ENCODE measurements at regions of chr7 and their contacts with region 1.

Region 1: DNA sequence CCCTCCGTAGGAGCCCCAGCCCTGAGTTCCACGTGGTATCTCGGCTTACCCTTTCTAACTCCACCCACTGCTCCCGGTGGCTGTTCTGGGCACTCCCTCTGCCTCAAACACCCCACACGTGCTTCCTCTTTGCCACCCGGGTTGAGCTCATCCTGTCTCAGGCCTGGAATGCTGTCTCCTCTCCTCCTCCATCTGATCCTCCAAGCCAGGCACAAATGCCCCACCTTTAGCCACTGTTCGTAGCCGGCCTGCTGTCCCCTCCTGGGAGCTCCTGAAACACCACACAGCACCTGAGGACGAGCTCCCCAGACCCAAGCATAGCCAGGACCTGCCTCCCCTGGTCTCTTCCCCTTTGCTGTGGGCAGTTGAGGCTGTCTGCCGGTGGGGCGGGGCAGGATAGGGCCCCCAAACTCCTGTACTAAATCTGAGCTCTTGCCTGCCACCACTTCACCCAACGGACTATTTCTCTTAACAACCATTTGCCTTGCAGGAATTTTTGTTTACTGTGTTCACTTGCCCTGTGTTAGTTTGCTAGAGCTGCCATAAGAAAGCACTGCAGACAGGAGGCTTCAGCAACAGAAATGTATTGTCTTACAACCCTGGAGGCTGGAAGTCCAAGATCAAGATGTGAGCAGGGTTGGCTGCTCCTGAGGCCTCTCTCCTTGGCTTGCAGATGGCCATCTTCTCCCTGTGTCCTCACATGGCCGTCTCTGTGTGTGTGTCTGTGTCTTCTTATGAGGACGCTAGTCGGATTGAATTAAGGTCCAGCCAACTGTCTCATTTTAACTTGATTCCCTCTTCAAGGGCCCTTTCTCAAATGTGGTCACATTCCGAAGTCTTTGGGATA is 58.3 kb upstream of the SHH start:
- DNase-seq: peak in 1 of 2 donors; percentile 79
- H3K4me3 ChIP-seq: no peak overlapping the region
- H3K27ac ChIP-seq: no peak overlapping the region
- H3K4me1 ChIP-seq: no peaks in the 10 kb centered on the region
- H3K27me3 ChIP-seq: no peaks in the 10 kb centered on the region
- CTCF ChIP-seq: no peak
- POLR2A ChIP-seq: no peak

Region 2: GRCh38 chr7:157457441-157458253 is 1587.1 kb after region 1 on chr7:
- intact Hi-C with region 1: loop called (anchors 5 kb)
- DNase-seq: no peak
- H3K4me3 ChIP-seq: no peak overlapping the region
- H3K27ac ChIP-seq: no peak overlapping the region
- H3K4me1 ChIP-seq: no peaks in the 10 kb centered on the region
- H3K27me3 ChIP-seq: no peaks in the 10 kb centered on the region
- CTCF ChIP-seq: no peak
- POLR2A ChIP-seq: no peak